Naive thymus-derived CD4-positive, alpha-beta T cell (primary cell): ENCODE measurements at regions of chr3 and their contacts with region 1.

Region 1: DNA sequence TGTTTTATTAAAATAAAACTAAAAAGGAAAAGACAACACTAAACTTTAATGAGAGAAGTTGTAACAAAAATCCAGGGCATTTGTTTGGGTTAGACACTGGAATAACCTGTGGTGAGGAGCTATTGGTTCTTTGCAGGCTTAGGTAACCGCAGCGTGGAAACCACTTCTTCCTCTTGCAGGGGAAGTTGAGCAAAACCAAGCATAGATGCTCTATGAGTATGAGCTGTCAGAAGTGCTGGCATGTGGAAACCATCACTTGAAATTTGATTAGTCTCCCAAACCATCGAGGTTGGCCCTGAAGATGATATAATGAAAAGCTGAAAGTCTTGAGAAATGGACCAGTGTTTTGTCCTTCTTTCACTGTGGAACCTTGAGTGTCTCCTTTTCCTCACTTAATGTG is 127.1 kb upstream of the RBMS3 start:
- DNase-seq: peak in 5 of 9 donors; percentile 13 to 41 (median 29)
- ATAC-seq: no peak
- H3K4me3 ChIP-seq: no peak overlapping the region
- H3K4me3 Mint-ChIP-seq: peak overlapping the region in 4 of 10 donors; percentile 5 to 29 (median 12)
- H3K27ac ChIP-seq: no peak overlapping the region
- H3K27ac Mint-ChIP-seq: peak overlapping the region in 1 of 9 donors; percentile 13
- H3K4me1 ChIP-seq: peaks cover 0 to 8% of the 10 kb centered on the region in 2 donors
- H3K4me1 Mint-ChIP-seq: peaks cover 0 to 19% (median 11%) of the 10 kb centered on the region in 7 donors
- H3K27me3 ChIP-seq: no peaks in the 10 kb centered on the region
- H3K27me3 Mint-ChIP-seq: peaks cover 0 to 31% (median 0%) of the 10 kb centered on the region in 5 donors

Region 2: GRCh38 chr3:29171043-29171990 is 17.5 kb after region 1 on chr3:
- CTCF ChIA-PET with region 1: no interaction called
- POLR2A ChIA-PET with region 1: no interaction called
- intact Hi-C with region 1: loop called in 1 of 2 experiments (anchors 1 kb)
- DNase-seq: peak in 6 of 9 donors; percentile 18 to 52 (median 33)
- ATAC-seq: peak; percentile 31
- H3K4me3 ChIP-seq: no peak overlapping the region
- H3K4me3 Mint-ChIP-seq: peak overlapping the region; percentile 21 to 76 (median 62)
- H3K27ac ChIP-seq: peak overlapping the region; percentile 23
- H3K27ac Mint-ChIP-seq: peak overlapping the region; percentile 66 to 92 (median 88)
- H3K4me1 ChIP-seq: peaks cover 0 to 11% of the 10 kb centered on the region in 2 donors
- H3K4me1 Mint-ChIP-seq: peaks cover 7 to 41% (median 26%) of the 10 kb centered on the region in 7 donors
- H3K27me3 ChIP-seq: no peaks in the 10 kb centered on the region
- H3K27me3 Mint-ChIP-seq: no peaks in the 10 kb centered on the region